Ascending aorta (tissue), 2 donors: ENCODE measurements at regions of chr13 and their contacts with region 1.

Region 1: DNA sequence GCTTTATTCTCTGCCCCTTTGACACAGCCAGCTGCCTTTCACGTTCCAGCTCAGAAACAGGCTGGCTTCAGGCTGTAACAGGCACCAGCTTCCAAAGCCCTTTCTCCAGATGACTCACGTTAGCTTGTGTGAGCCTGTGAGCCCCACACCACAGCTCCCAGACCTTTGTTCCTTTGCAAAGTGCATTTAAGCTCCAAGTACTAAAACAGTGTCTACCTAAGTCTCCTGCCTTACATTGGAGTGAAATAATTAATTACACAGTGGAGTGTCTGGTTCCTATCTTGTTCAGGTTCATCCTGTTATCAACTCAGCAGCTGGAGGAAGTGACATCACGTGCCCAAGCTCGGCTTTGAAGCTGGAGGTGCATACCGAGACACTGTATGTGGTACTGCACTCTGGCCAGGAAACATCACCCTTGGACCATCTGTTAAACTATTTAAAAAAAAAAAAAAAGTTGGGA is 475.8 kb downstream of the FOXO1 start:
- DNase-seq: peak; percentile 37 to 84
- H3K4me3 ChIP-seq: no peak overlapping the region
- H3K27ac ChIP-seq: peak overlapping the region; percentile 78 to 96
- H3K4me1 ChIP-seq: peaks cover 35 to 54% of the 10 kb centered on the region in 2 donors
- H3K27me3 ChIP-seq: no peaks in the 10 kb centered on the region
- CTCF ChIP-seq: no peak

Region 2: GRCh38 chr13:39552246-39552645 is 638.4 kb before region 1 on chr13:
- intact Hi-C with region 1: no loop called
- DNase-seq: no peak
- H3K4me3 ChIP-seq: no peak overlapping the region
- H3K27ac ChIP-seq: no peak overlapping the region
- H3K4me1 ChIP-seq: peaks cover 0 to 7% of the 10 kb centered on the region in 2 donors
- H3K27me3 ChIP-seq: no peaks in the 10 kb centered on the region
- CTCF ChIP-seq: no peak

Region 3: DNA sequence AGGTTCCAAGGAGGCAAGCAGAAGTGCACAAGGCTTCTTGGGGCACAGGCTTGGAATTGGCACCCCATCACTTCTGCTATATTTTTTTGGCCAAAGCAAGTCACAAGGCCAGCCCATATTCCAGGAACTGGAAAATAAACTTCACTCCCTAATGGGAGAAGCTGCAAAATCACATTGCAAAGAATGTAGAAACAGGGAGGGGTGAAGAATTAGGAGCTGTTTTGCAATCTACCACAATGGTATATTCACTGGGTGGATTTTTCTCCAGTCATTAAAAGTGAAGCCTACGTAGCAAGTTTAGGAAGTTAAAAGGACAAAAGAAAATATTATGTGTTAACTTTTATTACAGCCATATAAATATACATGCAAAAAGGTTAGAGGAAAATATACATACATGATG is 70.4 kb before region 1 on chr13:
- intact Hi-C with region 1: loop called (anchors 5 kb)
- DNase-seq: no peak
- H3K4me3 ChIP-seq: no peak overlapping the region
- H3K27ac ChIP-seq: peak overlapping the region; percentile 61 to 65
- H3K4me1 ChIP-seq: peaks cover 2 to 38% of the 10 kb centered on the region in 2 donors
- H3K27me3 ChIP-seq: no peaks in the 10 kb centered on the region
- CTCF ChIP-seq: no peak

Region 4: DNA sequence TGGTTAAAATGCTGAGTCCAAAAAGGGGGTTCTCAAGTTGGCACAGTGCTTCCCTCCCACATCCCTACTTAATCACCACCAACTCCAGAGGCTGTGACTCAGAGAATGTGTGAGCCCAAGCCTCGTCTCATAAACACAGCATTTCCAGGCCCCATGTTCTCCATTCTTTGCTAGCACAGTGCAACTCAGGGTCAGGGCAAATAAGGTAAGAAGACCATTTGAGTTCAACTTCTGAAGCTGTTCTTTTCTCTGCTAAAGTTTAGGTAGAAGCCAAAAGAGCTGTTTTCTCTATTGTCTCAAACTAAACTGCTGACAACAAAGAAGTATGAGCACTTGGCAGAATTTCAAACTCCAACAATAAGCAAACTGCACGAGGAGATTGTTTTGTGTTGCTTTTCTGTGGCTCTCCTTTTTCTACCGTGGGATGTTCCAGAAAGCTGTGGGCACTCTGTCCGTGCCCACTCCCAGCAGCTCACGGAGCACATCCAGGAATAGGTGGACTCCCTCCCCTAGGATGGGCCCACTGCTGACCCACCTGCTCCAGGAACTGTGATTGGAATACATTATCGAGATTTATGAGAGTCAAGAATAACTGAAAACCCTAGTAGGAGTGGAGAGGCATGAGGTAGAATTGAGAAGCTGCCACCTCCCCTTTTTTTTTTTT is 40.9 kb before region 1 on chr13:
- intact Hi-C with region 1: loop called (anchors 2 kb)
- DNase-seq: peak; percentile 66 to 75
- H3K4me3 ChIP-seq: no peak overlapping the region
- H3K27ac ChIP-seq: peak overlapping the region; percentile 49 to 85
- H3K4me1 ChIP-seq: peaks cover 6 to 15% of the 10 kb centered on the region in 2 donors
- H3K27me3 ChIP-seq: no peaks in the 10 kb centered on the region
- CTCF ChIP-seq: no peak

Region 5: GRCh38 chr13:40271931-40272775 is 81.5 kb after region 1 on chr13:
- intact Hi-C with region 1: loop called (anchors 2 kb)
- DNase-seq: peak; percentile 27 to 94
- H3K4me3 ChIP-seq: peak overlapping the region in 1 of 2 donors; percentile 18
- H3K27ac ChIP-seq: peak overlapping the region; percentile 88 to 90
- H3K4me1 ChIP-seq: peaks cover 5 to 29% of the 10 kb centered on the region in 2 donors
- H3K27me3 ChIP-seq: no peaks in the 10 kb centered on the region
- CTCF ChIP-seq: no peak

Region 6: DNA sequence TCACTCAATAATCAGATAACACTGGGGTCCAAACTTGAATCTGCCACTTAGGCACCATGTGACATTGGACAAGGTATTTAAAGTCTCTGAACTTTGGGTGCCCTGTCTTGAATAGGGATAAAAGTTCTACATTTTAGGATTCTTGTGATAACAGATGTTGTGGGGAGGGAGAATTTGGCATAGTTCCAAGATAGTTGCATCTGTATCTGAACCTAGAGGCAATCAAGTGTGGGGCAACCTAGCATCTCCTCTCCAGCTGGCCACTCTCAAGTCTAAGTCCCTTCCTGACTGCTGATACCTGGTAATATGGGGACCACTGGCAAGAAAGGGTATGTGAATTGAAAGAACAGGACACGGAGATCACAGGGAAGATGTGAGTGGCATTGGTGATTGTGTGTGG is 219.6 kb after region 1 on chr13:
- intact Hi-C with region 1: no loop called
- DNase-seq: no peak
- H3K4me3 ChIP-seq: no peak overlapping the region
- H3K27ac ChIP-seq: no peak overlapping the region
- H3K4me1 ChIP-seq: no peaks in the 10 kb centered on the region
- H3K27me3 ChIP-seq: no peaks in the 10 kb centered on the region
- CTCF ChIP-seq: no peak